ENCODE measurements at regions of chr3 and their contacts with region 1.

Region 1: DNA sequence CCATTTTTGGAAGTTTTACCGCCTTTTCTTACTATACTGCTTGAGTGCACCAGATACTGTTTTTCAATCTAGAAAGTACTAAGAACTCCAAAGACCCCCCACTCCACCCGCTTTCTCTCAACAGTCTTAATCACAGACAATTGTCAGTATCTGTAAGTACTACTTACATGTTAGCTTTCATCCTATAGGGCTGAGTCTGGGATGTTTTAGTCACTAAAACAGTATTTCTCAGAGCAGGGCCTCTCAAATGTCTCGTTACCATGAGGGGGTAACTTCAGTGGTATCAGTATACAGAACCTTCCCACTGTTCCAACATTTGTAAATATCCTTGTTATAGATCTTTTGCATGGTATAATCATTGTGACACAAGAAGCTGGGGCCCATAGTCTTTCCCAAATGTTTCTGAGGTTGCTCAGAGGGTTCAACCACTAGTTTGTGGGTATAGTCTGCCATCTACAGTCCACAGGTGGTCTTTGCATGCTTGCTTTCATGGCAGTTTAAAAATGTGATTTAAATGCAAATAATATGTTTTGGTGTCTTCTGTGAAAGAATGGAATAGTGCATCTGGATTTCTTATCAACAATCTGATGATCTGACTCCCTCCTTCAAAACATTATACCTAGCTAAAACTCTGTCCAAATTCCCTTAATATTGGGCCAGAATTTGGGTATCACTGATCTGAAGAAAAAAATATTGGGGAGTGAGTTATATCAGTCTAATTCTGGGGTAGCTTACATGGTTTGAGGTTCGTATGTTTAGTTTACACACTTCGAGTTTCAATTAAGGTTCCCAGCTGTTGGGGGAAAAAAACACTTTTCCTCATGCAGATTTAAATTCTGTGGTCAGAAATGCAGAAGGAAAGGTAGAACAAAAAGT is 18.0 kb upstream of the DNAJC13 start:
- DNase-seq: peak; percentile 46
- H3K4me3 Mint-ChIP-seq: no peak overlapping the region
- H3K27ac Mint-ChIP-seq: no peak overlapping the region
- H3K4me1 Mint-ChIP-seq: no peaks in the 10 kb centered on the region
- H3K27me3 Mint-ChIP-seq: peaks cover 11% of the 10 kb centered on the region

Region 2: DNA sequence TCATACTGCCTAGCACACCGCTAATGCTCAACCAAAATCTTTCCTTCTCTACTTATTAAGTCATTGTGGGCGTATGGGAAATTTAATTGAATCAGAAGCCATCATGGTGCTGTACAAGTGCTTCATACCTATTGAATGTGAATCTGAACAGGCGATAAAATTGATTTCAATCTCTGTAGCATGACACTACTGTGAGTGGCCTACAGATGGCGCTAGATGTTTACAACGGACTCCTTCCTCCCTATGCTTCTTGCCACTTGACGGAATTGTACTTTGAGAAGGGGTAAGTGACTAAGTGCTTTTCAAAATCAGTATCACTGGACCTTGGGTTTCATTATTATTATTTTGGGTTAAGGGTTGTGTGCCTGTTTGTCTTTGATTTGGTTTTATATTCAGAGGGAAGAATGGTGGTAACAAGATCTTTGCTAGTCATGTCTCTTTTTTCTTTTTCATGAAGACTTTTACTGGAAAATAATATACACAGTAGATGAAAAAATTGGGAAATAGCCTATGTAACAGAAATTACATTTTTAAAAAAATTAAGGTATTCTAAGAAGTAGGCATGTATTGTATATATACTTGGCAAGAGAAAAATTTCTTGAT is 46.6 kb before region 1 on chr3:
- CTCF ChIA-PET with region 1: interaction called, 61 read pairs
- DNase-seq: peak; percentile 76
- H3K4me3 Mint-ChIP-seq: no peak overlapping the region
- H3K27ac Mint-ChIP-seq: no peak overlapping the region
- H3K4me1 Mint-ChIP-seq: no peaks in the 10 kb centered on the region
- H3K27me3 Mint-ChIP-seq: peaks cover 12% of the 10 kb centered on the region

Region 3: DNA sequence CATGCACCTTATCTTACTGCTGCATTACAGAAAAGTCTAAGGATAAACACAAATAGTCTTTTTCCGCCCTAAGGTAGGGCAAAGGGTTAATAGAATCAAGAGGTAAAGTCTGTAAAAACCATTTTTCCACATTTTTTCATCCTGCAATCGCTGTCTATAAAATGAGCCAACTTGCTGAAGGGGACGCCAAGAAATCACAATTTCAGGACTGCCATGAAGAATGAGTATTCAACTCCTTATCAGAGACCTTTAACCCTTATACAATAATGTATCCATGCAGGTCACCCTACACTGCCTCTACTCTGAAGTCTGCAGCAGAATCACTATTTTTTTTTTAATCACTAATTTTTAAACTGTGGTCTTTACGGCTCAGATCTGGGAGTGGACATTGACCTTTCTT is 16.9 kb after region 1 on chr3:
- CTCF ChIA-PET with region 1: no interaction called
- DNase-seq: no peak
- H3K4me3 Mint-ChIP-seq: peak overlapping the region; percentile 95
- H3K27ac Mint-ChIP-seq: peak overlapping the region; percentile 96
- H3K4me1 Mint-ChIP-seq: peaks cover 27% of the 10 kb centered on the region
- H3K27me3 Mint-ChIP-seq: no peaks in the 10 kb centered on the region

Region 4: GRCh38 chr3:132907293-132907692 is 508.0 kb after region 1 on chr3:
- CTCF ChIA-PET with region 1: no interaction called
- DNase-seq: no peak
- H3K4me3 Mint-ChIP-seq: no peak overlapping the region
- H3K27ac Mint-ChIP-seq: no peak overlapping the region
- H3K4me1 Mint-ChIP-seq: no peaks in the 10 kb centered on the region
- H3K27me3 Mint-ChIP-seq: no peaks in the 10 kb centered on the region

Measured in activated naive CD4-positive, alpha-beta T cell treated with anti-CD3 and anti-CD28 coated beads, Interleukin-2, amount 10 ng/mL, durations not matched to agents 7 days and 5 days (primary cell).